ENCODE measurements at regions of chr15 and their contacts with region 1.

Region 1: GRCh38 chr15:41774062-41774881 is at the start of gene MAPKBP1:
- DNase-seq: peak; percentile 96
- H3K4me3 ChIP-seq: peak within 1 kb of the TSS; percentile 86
- H3K27ac ChIP-seq: peak within 1 kb of the TSS; percentile 49
- H3K27me3 ChIP-seq: no peaks in the 10 kb centered on the region
- CTCF ChIP-seq: peak; percentile 79
- polyA plus RNA-seq, gene MAPKBP1: 6.1 and 10.3 TPM in 2 replicates

Region 2: GRCh38 chr15:41557673-41558399 is 216.4 kb before region 1 on chr15:
- CTCF ChIA-PET with region 1: interaction called, 10 read pairs
- POLR2A ChIA-PET with region 1: no interaction called
- DNase-seq: peak; percentile 39
- H3K4me3 ChIP-seq: peak overlapping the region; percentile 67
- H3K27ac ChIP-seq: no peak overlapping the region
- H3K27me3 ChIP-seq: no peaks in the 10 kb centered on the region
- CTCF ChIP-seq: peak; percentile 91

Region 3: DNA sequence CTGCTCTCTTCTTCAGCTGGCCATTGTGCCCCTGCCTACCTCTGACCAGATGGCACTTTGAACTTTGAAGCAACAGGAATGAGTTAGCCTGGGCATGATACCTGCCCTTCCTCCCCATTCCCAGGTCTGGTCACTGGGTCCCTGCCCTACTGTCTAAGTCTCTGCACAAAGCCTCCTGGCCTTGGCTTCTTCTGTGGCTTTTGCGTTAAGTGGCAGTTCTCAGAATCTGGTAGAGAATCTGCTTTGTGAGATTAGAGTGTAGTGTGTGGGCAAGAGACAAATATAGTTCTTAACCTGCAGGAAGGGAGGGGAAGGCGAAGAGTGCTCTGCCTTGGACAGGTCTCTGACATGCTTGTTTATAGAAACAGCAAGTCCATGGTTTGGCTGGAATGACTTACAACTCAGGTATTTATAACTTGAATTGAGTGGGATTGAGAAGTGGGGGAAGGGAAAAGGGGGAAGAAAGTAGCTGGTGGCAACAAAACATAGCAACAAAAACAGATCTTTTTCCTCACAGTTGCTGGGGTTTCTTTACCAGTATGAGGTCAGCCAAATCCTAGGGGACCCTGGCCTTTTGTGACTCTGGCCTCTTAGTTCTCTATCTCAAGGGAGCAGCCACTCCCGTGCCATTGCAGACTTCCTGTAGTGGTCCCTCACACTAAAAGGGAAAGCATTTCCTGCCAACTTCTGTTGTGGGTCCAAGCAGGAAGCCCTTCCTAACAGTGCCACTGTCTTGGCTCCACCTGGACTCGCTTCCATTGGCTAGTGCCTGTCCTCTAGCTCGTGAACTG is 16.7 kb after region 1 on chr15:
- CTCF ChIA-PET with region 1: interaction called, 59 read pairs
- POLR2A ChIA-PET with region 1: no interaction called
- DNase-seq: no peak
- H3K4me3 ChIP-seq: 0 out of 2 replicates have a peak overlapping the region, but pooled peaks have one; percentile 7
- H3K27ac ChIP-seq: peak overlapping the region; percentile 75
- H3K27me3 ChIP-seq: no peaks in the 10 kb centered on the region
- CTCF ChIP-seq: no peak

Region 4: GRCh38 chr15:41811432-41812195 is 37.3 kb after region 1 on chr15:
- CTCF ChIA-PET with region 1: interaction called, 362 read pairs
- POLR2A ChIA-PET with region 1: interaction called, 8 read pairs
- DNase-seq: peak; percentile 71
- H3K4me3 ChIP-seq: no peak overlapping the region
- H3K27ac ChIP-seq: no peak overlapping the region
- H3K27me3 ChIP-seq: no peaks in the 10 kb centered on the region
- CTCF ChIP-seq: peak; percentile 97

Region 5: GRCh38 chr15:42157981-42158765 is 383.9 kb after region 1 on chr15:
- CTCF ChIA-PET with region 1: no interaction called
- POLR2A ChIA-PET with region 1: no interaction called
- DNase-seq: peak; percentile 29
- H3K4me3 ChIP-seq: no peak overlapping the region
- H3K27ac ChIP-seq: no peak overlapping the region
- H3K27me3 ChIP-seq: no peaks in the 10 kb centered on the region
- CTCF ChIP-seq: no peak

Measured in AG04450 (cell line).